Right ventricle myocardium inferior (tissue), 1 donor: ENCODE measurements at regions of chr10 and their contacts with region 1.

Region 1: GRCh38 chr10:79929409-79929904 is 19.4 kb downstream of the SFTPD start:
- DNase-seq: peak; percentile 91
- ATAC-seq: peak; percentile 73

Region 2: DNA sequence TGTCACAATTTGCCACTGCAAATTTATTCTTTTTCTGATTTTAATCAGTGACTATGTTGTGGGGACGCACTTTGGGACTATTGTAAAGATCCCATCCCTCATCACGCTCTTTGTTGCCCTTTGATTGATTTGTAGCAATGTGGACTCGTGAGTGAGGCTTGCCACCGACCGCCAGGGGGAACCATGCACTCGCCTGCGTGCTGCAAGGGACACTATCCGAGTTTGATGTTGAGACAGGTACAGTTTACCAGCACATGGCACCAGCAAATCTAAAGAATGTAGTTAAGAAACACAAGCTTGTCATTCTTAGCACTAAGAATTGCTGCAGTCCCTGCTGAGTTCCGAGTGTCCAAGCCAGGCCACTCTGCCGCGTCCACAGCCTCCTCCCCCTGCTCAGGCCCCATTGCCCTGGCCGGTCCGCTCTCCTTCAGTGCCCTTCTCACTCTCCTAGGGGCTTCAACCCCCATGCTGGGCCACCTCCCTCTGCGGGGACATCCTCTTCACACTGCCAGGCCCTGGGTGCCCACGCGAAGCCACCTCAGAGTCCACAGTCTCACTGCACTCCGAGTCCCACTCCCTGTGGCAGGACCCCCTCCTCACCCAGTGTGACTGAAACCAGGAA is 367.2 kb before region 1 on chr10:
- intact Hi-C with region 1: loop called (anchors 2 kb)
- DNase-seq: peak; percentile 71
- ATAC-seq: peak; percentile 63

Region 3: GRCh38 chr10:79979976-79980687 is 50.7 kb after region 1 on chr10:
- intact Hi-C with region 1: no loop called
- DNase-seq: no peak
- ATAC-seq: no peak